OCI-LY7 (cell line): ENCODE measurements at regions of chr15 and their contacts with region 1.

Region 1: DNA sequence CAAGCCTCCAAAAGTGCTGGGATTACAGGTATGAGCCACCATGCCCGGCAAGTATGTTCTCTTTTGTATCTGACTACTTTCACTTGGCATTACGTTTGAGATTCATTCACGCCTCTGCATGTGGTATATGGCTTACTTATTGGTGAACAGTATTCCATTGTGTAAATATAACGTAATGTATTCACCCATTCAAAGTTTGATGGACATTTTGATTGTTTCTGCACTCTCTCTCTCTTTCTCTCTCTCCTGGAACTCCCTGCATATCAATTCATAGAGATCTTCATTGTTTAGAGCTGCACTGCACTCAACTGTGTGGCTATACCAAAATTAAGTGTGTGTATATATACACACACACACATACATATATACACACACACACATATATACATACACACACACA is 30.4 kb downstream of the SPPL2A start:
- DNase-seq: no peak
- H3K4me3 ChIP-seq: no peak overlapping the region
- H3K27ac ChIP-seq: no peak overlapping the region
- H3K4me1 ChIP-seq: no peaks in the 10 kb centered on the region
- CTCF ChIP-seq: no peak

Region 2: GRCh38 chr15:50562735-50563640 is 172.2 kb before region 1 on chr15:
- CTCF ChIA-PET with region 1: no interaction called
- POLR2A ChIA-PET with region 1: no interaction called
- intact Hi-C with region 1: no loop called
- DNase-seq: no peak
- H3K4me3 ChIP-seq: no peak overlapping the region
- H3K27ac ChIP-seq: no peak overlapping the region
- H3K4me1 ChIP-seq: no peaks in the 10 kb centered on the region
- CTCF ChIP-seq: no peak

Region 3: DNA sequence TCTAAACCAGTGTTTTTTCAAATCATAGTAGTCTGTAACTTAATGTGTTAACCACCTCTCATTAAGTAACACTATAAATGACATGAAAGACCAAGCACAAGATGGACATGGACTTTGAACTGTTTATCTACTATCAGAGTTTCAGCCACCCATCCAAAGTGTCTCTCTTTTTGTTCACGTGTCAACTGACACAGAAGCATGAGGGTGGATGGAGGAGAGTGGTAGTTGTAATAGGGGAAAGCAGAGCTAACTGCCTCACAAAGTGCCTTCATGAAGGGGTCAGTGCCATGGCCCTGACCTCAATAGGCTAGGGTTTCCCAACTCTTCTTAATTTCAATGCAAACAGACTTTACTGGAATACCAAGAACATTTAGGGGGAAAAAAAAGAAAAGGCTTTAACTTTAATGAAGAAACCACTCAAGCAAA is 16.4 kb before region 1 on chr15:
- CTCF ChIA-PET with region 1: no interaction called
- POLR2A ChIA-PET with region 1: interaction called, 11 read pairs
- intact Hi-C with region 1: no loop called
- DNase-seq: no peak
- H3K4me3 ChIP-seq: no peak overlapping the region
- H3K27ac ChIP-seq: no peak overlapping the region
- H3K4me1 ChIP-seq: no peaks in the 10 kb centered on the region
- CTCF ChIP-seq: no peak